K562 (cell line): ENCODE measurements at regions of chr12 and their contacts with region 1.

Region 1: DNA sequence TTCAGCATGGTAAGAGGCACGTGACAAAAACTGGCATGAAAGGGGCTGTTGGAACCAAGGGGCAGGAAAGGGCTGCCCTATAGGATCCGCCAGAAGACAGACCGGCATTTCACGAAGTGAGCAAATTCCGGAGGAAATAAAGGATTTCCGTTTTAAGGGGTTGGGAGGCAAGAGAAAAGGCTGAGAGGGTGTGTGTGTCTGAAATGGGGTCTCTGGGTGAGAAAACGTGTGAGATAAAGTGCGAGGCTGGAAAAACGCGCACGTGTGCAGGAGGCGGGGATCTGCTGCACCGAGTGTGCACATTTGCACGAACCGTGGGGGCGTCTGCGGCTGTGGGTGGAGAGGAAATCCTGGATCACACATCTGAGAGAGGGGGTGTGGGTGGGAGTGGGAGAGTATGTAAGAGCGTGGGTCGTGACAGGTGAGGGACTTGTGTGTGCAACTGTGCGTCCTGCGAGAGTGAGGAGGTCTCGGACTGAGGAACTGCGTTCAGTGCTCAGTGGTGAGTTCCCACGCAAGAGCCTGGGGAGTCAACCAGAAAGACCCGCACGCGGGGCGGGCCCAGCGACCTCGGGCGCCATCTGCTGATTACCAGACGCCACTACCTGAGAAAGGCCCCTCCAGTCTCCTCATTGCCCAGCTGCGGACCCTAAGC is 37.0 kb upstream of the P2RX7 start:
- DNase-seq: peak; percentile 78 to 89 (median 88)
- ATAC-seq: peak; percentile 99
- H3K4me3 ChIP-seq: peak overlapping the region; percentile 21
- H3K27ac ChIP-seq: no peak overlapping the region
- H3K4me1 ChIP-seq: peaks cover 4 to 13% of the 10 kb centered on the region in 2 experiments; a peak in 3 of 5 replicates
- H3K27me3 ChIP-seq: peaks cover 0 to 6% of the 10 kb centered on the region in 2 experiments; a peak in 1 of 5 replicates
- CTCF ChIP-seq: peak; percentile 84 to 88 (median 85)
- EP300 ChIP-seq: no peak
- POLR2A ChIP-seq: no peak
- RAD21 ChIP-seq: peak; percentile 67 to 84

Region 2: GRCh38 chr12:121015825-121016766 is 79.6 kb before region 1 on chr12 and contains the start of gene C12orf43:
- CTCF ChIA-PET with region 1: no interaction called
- POLR2A ChIA-PET with region 1: interaction called, 3 read pairs
- in situ Hi-C with region 1: no loop called
- intact Hi-C with region 1: loop called (anchors 10 kb)
- DNase-seq: peak; percentile 90 to 96 (median 92)
- ATAC-seq: peak; percentile 97
- H3K4me3 ChIP-seq: peak within 1 kb of the TSS; percentile 91
- H3K27ac ChIP-seq: peak within 1 kb of the TSS; percentile 67
- H3K4me1 ChIP-seq: peaks cover 5 to 9% of the 10 kb centered on the region in 2 experiments; a peak in 3 of 5 replicates
- H3K27me3 ChIP-seq: no peaks in the 10 kb centered on the region
- CTCF ChIP-seq: no peak
- EP300 ChIP-seq: no peak
- POLR2A ChIP-seq: peak; percentile 87
- RAD21 ChIP-seq: no peak
- polyA plus RNA-seq, gene C12orf43: 4.3 to 6.5 TPM